Activated CD4-positive, alpha-beta memory T cell treated with anti-CD3 and anti-CD28 coated beads for 36 hours (primary cell): ENCODE measurements at regions of chr22 and their contacts with region 1.

Region 1: DNA sequence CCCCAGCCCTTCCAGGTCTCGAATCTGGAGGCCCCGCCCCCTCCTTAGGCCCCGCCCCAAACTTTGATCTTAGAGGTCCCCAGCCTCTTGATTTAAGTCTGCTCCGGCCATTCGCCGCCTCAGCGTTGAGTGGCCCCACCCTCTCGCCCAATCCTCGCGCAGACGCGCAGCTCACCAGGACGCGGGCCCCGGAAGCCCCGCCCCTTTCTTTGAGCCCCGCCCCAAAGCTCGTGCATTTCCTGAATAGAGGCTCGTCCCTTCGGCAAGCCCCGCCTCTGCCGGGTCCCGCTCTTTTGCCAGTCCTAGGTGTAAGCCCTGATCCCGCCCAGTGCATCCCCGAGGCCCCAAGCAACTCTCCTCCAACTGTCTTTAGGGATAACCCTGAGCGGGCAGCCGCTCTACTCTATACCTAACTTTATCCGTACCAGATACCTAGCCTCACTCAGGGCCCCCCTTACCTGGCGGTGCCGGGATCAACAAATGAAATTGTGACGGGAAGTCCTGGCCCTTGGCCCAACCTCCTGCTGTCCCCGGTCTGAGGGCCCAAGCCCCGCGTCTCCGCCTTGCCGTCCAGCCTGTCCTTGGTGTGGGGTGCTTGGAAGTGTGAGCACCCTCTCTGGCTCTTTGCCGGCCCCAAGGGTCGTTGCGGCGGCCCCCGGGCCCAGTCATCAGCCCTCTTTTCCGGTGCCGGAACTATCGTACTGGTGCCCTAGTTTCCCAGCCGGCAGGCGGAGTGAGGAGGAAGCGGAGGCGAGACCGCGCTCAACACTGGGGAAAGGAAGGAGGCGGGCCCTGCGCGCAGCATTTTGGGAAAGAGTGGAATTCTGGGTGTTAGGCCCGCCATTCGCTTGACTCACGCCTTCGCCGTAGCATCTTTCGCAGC is at the start of gene SNRPD3:
- DNase-seq: peak; percentile 100
- H3K4me3 Mint-ChIP-seq: peak within 1 kb of the TSS; percentile 97
- H3K27ac Mint-ChIP-seq: peak within 1 kb of the TSS; percentile 98
- H3K4me1 Mint-ChIP-seq: peaks cover 48% of the 10 kb centered on the region
- H3K27me3 Mint-ChIP-seq: no peaks in the 10 kb centered on the region
- total RNA-seq, gene SNRPD3: 131 TPM

Region 2: GRCh38 chr22:23913661-23914353 is 641.6 kb before region 1 on chr22:
- CTCF ChIA-PET with region 1: no interaction called
- POLR2A ChIA-PET with region 1: no interaction called
- intact Hi-C with region 1: loop called (anchors 10 kb)
- DNase-seq: peak; percentile 100
- H3K4me3 Mint-ChIP-seq: peak overlapping the region; percentile 92
- H3K27ac Mint-ChIP-seq: peak overlapping the region; percentile 97
- H3K4me1 Mint-ChIP-seq: peaks cover 15% of the 10 kb centered on the region
- H3K27me3 Mint-ChIP-seq: no peaks in the 10 kb centered on the region

Region 3: GRCh38 chr22:24594499-24595120 is 39.2 kb after region 1 on chr22:
- CTCF ChIA-PET with region 1: no interaction called
- POLR2A ChIA-PET with region 1: no interaction called
- intact Hi-C with region 1: loop called (anchors 5 kb)
- DNase-seq: no peak
- H3K4me3 Mint-ChIP-seq: no peak overlapping the region
- H3K27ac Mint-ChIP-seq: no peak overlapping the region
- H3K4me1 Mint-ChIP-seq: peaks cover 2% of the 10 kb centered on the region
- H3K27me3 Mint-ChIP-seq: peaks cover 6% of the 10 kb centered on the region

Region 4: DNA sequence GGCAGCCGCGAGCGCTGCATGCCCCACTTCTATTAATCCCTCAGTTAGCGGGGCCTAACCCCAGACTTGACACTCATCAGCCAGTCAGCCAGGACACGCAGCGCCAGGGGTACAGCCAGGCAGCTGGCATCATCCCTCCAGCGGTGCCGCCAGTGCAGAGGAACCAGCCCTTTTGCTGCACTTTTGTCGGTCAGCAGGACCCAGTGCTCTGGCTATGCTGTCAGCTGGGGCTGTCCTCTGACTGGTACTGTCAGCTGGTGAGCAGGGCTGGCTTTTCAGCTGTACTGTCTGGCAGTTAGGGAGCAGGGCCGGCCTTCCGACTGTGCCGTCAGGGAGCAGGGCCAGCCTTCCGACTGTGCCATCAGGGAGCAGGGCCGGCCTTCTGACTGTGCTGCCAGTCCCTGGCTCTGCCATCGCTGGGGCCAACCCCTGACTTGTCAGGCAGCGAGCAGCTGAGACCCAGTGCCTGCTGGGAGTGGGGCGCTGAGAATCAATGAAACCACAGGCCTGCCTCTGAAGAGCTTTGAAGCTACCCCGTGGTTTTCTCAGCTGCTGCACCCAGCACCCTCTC is 512.5 kb after region 1 on chr22:
- CTCF ChIA-PET with region 1: no interaction called
- POLR2A ChIA-PET with region 1: no interaction called
- intact Hi-C with region 1: loop called (anchors 5 kb)
- DNase-seq: peak; percentile 87
- H3K4me3 Mint-ChIP-seq: peak overlapping the region; percentile 81
- H3K27ac Mint-ChIP-seq: peak overlapping the region; percentile 87
- H3K4me1 Mint-ChIP-seq: peaks cover 71% of the 10 kb centered on the region
- H3K27me3 Mint-ChIP-seq: no peaks in the 10 kb centered on the region